ENCODE measurements at regions of chr15 and their contacts with region 1.

Region 1: DNA sequence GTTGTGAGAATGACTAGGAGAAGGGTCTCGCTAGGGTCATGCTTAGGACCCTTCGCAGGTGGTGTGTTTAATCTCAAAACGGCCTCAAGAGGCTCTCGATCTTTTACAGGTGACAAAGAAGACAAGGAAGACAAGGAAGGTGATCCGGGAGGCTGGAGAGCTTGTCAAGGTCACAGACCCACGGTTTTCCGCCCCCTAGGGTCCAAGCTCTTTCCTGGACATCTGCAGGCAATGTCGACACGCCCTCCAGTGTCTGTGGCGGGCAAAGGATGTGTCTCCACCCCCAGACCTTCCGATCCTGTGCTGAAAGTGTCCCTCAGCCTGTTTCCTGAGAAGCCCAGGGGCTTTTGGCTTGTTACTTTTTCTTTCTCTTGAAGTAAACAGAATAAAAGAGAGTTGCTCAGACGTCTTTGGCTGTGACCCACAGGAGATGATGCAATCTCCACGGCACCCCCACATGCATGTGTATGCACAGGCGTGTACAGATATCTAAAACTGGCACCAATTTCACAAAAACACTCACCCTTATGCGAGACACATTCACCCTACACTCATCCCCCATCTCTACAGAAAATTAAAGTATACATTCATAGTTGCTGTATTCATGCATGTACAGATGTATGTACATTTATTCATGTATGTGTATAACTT is 108.8 kb downstream of the KLF13 start:
- DNase-seq: peak; percentile 83 to 89
- ATAC-seq: peak; percentile 80 to 88
- H3K4me3 ChIP-seq: peak overlapping the region; percentile 12; the same call in 1 of the 3 replicates
- H3K27ac ChIP-seq: peak overlapping the region; percentile 57 to 74; a peak in 5 of 6 replicates
- H3K4me1 ChIP-seq: peaks cover 13% of the 10 kb centered on the region
- CTCF ChIP-seq: peak; percentile 94
- EP300 ChIP-seq: no peak
- POLR2A ChIP-seq: no peak
- RAD21 ChIP-seq: peak; percentile 91 to 93

Region 2: DNA sequence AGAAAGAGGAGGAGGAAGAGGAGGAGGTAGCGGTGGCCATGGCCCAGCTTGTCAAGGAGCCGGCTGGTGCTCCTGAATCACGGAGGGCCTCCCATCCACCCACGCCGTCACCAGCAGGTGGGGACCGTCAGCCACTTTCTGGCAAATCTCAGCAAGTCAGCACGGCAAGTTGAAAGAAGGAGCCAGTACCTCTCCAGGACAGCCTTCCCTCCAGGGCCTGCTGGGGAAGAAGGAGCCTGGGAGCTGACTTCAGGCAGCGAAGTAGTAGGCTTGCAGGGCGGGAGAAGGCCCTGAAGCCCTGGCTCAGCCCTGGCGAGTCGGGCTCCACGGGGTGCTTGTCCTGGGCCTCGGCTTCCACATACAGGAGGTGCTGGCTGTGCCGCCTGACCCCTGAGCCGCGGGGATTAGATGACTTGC is 234.6 kb before region 1 on chr15:
- CTCF ChIA-PET with region 1: interaction called, 37 read pairs
- POLR2A ChIA-PET with region 1: no interaction called
- DNase-seq: peak; percentile 66 to 75
- ATAC-seq: peak; percentile 77 to 89
- H3K4me3 ChIP-seq: no peak overlapping the region
- H3K27ac ChIP-seq: peak overlapping the region in 1 of 2 experiments; percentile 30; a peak in 2 of 6 replicates
- H3K4me1 ChIP-seq: no peaks in the 10 kb centered on the region
- CTCF ChIP-seq: peak; percentile 62
- EP300 ChIP-seq: no peak
- POLR2A ChIP-seq: no peak
- RAD21 ChIP-seq: peak; percentile 82 to 86

Region 3: GRCh38 chr15:31206386-31206785 is 229.0 kb before region 1 on chr15:
- CTCF ChIA-PET with region 1: interaction called, 53 read pairs
- POLR2A ChIA-PET with region 1: no interaction called
- DNase-seq: no peak
- ATAC-seq: peak; percentile 19 to 43; a peak in 2 of 6 replicates
- H3K4me3 ChIP-seq: no peak overlapping the region
- H3K27ac ChIP-seq: no peak overlapping the region
- H3K4me1 ChIP-seq: no peaks in the 10 kb centered on the region
- CTCF ChIP-seq: 0 out of 3 replicates have a peak, but pooled peaks have one; percentile 12
- EP300 ChIP-seq: no peak
- POLR2A ChIP-seq: no peak
- RAD21 ChIP-seq: peak; percentile 45 to 46; a peak in 4 of 5 replicates

Region 4: DNA sequence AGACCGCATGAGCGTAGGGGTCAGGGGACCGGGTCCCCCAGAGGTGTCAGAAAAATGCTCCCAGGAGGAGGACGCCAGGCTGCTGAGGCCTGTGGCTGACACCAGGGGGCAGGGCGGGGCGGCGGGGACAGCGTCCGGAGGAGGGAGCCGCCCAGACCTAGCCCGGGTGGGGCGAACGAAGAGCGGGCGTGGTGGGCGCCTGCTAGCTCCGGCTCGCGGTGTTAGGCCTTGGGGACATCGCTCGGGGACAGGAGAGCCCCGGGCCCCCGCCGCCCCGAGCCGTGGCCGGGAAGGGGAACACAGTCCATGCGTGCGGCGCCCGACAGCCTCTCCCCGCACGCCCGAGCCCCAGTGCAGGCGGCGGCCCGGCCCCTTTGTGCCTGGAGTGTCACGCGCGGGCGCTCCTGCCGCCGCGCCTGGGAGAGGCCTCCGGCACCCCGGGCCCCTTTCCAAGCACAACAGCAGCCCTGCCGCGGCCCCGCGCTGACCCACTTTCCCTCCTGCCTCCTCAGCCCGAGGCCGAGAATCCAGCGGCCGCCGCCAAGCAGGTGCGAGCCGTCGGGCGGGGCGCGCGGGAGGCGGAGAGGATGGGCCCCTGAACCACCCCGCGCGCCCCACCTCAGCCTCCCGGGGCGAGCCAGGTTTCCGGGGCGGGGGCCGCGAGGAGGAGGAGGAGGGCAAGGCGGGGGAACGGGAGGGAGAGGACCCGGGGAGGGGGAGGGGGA is 219.7 kb before region 1 on chr15:
- CTCF ChIA-PET with region 1: interaction called, 53 read pairs
- POLR2A ChIA-PET with region 1: interaction called, 4 read pairs
- DNase-seq: peak; percentile 85 to 91
- ATAC-seq: peak; percentile 77 to 89
- H3K4me3 ChIP-seq: peak overlapping the region; percentile 69
- H3K27ac ChIP-seq: peak overlapping the region; percentile 96 to 97
- H3K4me1 ChIP-seq: peaks cover 21% of the 10 kb centered on the region
- CTCF ChIP-seq: peak; percentile 83
- EP300 ChIP-seq: no peak
- POLR2A ChIP-seq: peak; percentile 22; the same call in 1 of the 2 replicates
- RAD21 ChIP-seq: peak; percentile 72 to 88

Region 5: DNA sequence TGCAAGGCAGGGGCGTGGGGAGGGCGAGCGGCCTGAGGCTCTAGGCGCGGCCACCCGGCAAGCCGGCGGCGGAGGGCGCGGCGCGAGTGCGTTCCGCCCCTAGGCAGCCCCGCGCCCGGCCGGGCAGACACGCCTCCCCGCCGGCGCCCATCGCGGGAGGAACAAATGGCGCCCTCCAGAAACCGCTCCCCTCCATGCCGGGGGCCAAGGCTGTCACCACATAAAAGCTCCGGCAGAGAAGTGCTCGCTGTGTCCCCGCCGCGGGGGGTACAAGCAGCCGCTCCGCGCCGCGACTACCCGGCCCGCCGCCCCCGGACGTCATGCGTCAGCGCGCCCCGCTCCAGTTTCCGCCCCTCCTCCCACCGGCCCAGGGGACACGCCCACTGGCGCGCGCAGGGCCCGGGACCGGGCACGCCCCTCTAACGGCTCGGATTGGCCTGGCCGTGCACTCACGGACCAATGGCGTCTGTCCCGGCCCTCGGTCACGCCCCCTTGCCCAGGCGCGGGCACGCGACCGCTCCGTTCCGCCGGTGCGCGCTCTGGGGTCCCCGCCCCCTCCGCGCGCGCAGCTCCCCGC is 109.1 kb before region 1 on chr15:
- CTCF ChIA-PET with region 1: interaction called, 15 read pairs
- POLR2A ChIA-PET with region 1: interaction called, 7 read pairs
- DNase-seq: peak; percentile 98 to 99
- ATAC-seq: peak; percentile 63 to 87
- H3K4me3 ChIP-seq: peak overlapping the region; percentile 71
- H3K27ac ChIP-seq: peak overlapping the region; percentile 94
- H3K4me1 ChIP-seq: peaks cover 24% of the 10 kb centered on the region
- CTCF ChIP-seq: no peak
- EP300 ChIP-seq: no peak
- POLR2A ChIP-seq: no peak; the same call in none of the 2 replicates
- RAD21 ChIP-seq: no peak

Region 6: GRCh38 chr15:31448635-31448979 is 13.2 kb after region 1 on chr15:
- CTCF ChIA-PET with region 1: interaction called, 10 read pairs
- POLR2A ChIA-PET with region 1: no interaction called
- DNase-seq: no peak
- ATAC-seq: no peak
- H3K4me3 ChIP-seq: no peak overlapping the region
- H3K27ac ChIP-seq: no peak overlapping the region
- H3K4me1 ChIP-seq: peaks cover 6% of the 10 kb centered on the region
- CTCF ChIP-seq: no peak
- EP300 ChIP-seq: no peak
- POLR2A ChIP-seq: no peak
- RAD21 ChIP-seq: no peak

Region 7: GRCh38 chr15:31458591-31459399 is 23.4 kb after region 1 on chr15:
- CTCF ChIA-PET with region 1: interaction called, 11 read pairs
- POLR2A ChIA-PET with region 1: interaction called, 3 read pairs
- DNase-seq: no peak
- ATAC-seq: no peak
- H3K4me3 ChIP-seq: no peak overlapping the region
- H3K27ac ChIP-seq: peak overlapping the region; percentile 68 to 73; a peak in 4 of 6 replicates
- H3K4me1 ChIP-seq: peaks cover 35% of the 10 kb centered on the region
- CTCF ChIP-seq: no peak
- EP300 ChIP-seq: no peak
- POLR2A ChIP-seq: no peak
- RAD21 ChIP-seq: no peak

Region 8: GRCh38 chr15:31598620-31599019 is 163.2 kb after region 1 on chr15:
- CTCF ChIA-PET with region 1: no interaction called
- POLR2A ChIA-PET with region 1: no interaction called
- DNase-seq: no peak
- ATAC-seq: no peak
- H3K4me3 ChIP-seq: no peak overlapping the region
- H3K27ac ChIP-seq: no peak overlapping the region
- H3K4me1 ChIP-seq: 0 out of 3 replicates have a peak, but pooled peaks cover 2% of the 10 kb centered on the region
- CTCF ChIP-seq: no peak
- EP300 ChIP-seq: no peak
- POLR2A ChIP-seq: no peak
- RAD21 ChIP-seq: no peak

Measured in A549 (cell line).